ENCODE measurements at regions of chr13 and their contacts with region 1.

Region 1: GRCh38 chr13:60431108-60431700 is 34.2 kb downstream of the TDRD3 start:
- DNase-seq: peak; percentile 87
- H3K4me3 ChIP-seq: no peak overlapping the region
- H3K27ac ChIP-seq: peak overlapping the region; percentile 35
- H3K4me1 ChIP-seq: peaks cover 36% of the 10 kb centered on the region
- H3K27me3 ChIP-seq: no peaks in the 10 kb centered on the region
- CTCF ChIP-seq: peak; percentile 86

Region 2: GRCh38 chr13:59750860-59751259 is 680.3 kb before region 1 on chr13:
- CTCF ChIA-PET with region 1: no interaction called
- POLR2A ChIA-PET with region 1: no interaction called
- intact Hi-C with region 1: loop called (anchors 5 kb)
- DNase-seq: peak; percentile 93
- H3K4me3 ChIP-seq: peak overlapping the region; percentile 35
- H3K27ac ChIP-seq: peak overlapping the region; percentile 76
- H3K4me1 ChIP-seq: peaks cover 73% of the 10 kb centered on the region
- H3K27me3 ChIP-seq: no peaks in the 10 kb centered on the region
- CTCF ChIP-seq: peak; percentile 29; the same call in 1 of the 2 replicates

Region 3: GRCh38 chr13:59771272-59771671 is 659.9 kb before region 1 on chr13:
- CTCF ChIA-PET with region 1: no interaction called
- POLR2A ChIA-PET with region 1: no interaction called
- intact Hi-C with region 1: loop called (anchors 5 kb)
- DNase-seq: peak; percentile 73
- H3K4me3 ChIP-seq: no peak overlapping the region
- H3K27ac ChIP-seq: peak overlapping the region; percentile 70
- H3K4me1 ChIP-seq: peaks cover 83% of the 10 kb centered on the region
- H3K27me3 ChIP-seq: no peaks in the 10 kb centered on the region
- CTCF ChIP-seq: peak; percentile 80

Region 4: DNA sequence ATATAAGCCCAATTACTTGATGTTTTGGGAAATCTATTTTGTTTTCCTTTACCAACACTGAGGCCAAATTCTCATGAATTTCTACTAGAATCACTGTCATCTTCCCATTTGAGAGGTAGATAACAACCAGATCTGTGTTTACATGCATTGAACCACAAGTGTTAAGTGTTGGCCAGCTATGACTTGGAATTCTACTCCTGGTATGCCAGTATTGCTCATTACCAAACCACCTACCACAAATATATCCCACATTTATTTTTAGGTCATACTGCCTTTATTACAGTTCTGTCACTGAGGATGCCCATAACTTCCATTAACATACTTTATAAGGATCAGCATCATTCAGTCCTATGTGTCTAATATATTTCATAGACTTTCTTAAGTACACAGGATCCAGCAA is 596.4 kb before region 1 on chr13:
- CTCF ChIA-PET with region 1: no interaction called
- POLR2A ChIA-PET with region 1: no interaction called
- intact Hi-C with region 1: loop called (anchors 10 kb)
- DNase-seq: no peak
- H3K4me3 ChIP-seq: no peak overlapping the region
- H3K27ac ChIP-seq: peak overlapping the region; percentile 77
- H3K4me1 ChIP-seq: peaks cover 54% of the 10 kb centered on the region
- H3K27me3 ChIP-seq: no peaks in the 10 kb centered on the region
- CTCF ChIP-seq: no peak

Region 5: DNA sequence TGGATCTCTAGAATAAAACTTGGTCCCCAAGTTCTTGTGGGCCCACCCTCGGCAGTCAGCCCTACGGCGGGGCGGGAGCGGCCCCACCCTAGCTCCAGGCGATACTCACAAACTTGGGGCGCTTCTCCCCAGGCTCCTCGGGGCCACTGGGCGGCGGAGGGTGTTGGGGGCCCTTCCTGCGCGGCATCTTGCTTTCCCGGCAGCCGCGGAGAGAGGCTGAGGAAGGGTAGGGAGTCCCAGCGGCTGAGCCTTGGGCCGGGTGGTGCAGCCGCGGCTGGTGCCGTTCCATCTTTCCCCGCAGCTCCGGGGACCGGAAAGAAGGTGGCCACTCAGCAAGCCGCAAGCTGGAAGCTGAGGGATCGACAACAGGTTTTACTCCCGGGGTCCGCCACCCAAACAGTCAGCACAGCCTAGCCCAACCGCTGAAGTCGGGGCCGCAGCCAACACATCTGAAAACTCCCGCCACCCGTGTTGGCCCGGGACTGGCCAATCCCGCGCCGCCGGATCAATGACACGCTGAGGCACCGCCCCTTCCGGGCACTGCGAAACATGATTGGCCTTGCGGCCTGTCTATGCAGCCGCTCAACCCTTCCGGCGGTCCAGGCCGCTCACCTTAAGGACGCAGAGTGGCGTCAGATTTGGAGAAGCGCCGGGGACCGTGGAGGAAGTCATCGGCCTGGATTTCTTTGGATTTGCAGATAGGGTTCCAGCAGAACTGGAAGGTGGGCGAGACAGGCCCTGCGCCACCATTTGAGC is 267.5 kb before region 1 on chr13 and contains the start of gene DIAPH3:
- CTCF ChIA-PET with region 1: no interaction called
- POLR2A ChIA-PET with region 1: no interaction called
- intact Hi-C with region 1: loop called (anchors 5 kb)
- DNase-seq: peak; percentile 97
- H3K4me3 ChIP-seq: peak within 1 kb of the TSS; percentile 79
- H3K27ac ChIP-seq: peak within 1 kb of the TSS; percentile 84
- H3K4me1 ChIP-seq: peaks cover 17% of the 10 kb centered on the region
- H3K27me3 ChIP-seq: no peaks in the 10 kb centered on the region
- CTCF ChIP-seq: no peak
- total RNA-seq, gene DIAPH3: 62.3 and 65.7 TPM in 2 replicates

Region 6: GRCh38 chr13:60335531-60335930 is 95.7 kb before region 1 on chr13:
- CTCF ChIA-PET with region 1: interaction called, 3 read pairs
- POLR2A ChIA-PET with region 1: no interaction called
- intact Hi-C with region 1: loop called (anchors 2 kb)
- DNase-seq: peak; percentile 64
- H3K4me3 ChIP-seq: no peak overlapping the region
- H3K27ac ChIP-seq: peak overlapping the region; percentile 88
- H3K4me1 ChIP-seq: peaks cover 53% of the 10 kb centered on the region
- H3K27me3 ChIP-seq: no peaks in the 10 kb centered on the region
- CTCF ChIP-seq: peak; percentile 82

Region 7: DNA sequence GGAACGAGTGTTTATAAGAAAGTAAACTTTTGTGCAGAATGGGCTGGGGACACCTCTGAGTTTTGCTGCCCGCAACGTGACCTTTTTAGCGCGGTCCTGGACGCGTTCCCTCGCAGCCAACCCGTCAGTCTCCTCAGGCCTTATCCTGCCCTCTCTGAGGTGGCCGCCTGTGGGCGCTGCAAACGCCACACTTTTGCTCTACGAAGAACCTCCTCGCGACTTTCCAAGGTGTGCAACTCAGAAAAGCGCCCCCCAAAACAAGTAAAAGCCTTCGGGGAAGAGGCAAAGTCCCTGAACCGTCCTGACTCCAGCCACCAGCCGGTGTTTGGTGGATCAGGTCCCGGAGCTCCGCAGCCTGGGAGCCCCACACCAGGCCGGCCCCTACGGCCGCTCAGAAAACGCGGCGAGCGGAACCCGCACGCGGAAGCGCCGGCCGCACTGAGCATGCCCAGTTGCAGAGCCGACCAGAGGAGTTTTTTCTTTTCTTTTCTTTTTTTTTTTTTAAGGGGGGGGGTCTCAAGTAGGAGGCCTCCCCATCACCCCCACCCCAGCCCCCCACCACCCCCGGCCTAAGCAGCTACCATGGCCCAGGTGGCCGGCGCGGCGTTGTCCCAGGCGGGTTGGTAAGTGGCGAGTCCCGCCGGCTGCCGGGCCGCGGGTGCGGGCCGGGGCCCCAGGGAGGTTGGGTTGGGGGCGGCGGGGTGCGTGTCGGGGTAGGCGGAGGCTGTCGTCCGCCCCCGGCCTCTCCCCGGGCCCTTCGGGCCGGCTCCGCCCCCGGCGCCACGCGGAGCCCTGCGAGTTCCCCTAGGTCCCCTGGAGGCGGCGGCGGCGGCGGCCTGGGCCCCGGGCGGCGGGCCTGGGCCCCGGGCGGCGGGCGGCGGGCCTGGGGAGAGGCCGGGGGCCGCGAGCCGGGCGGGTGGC is 34.2 kb before region 1 on chr13 and contains the start of gene TDRD3:
- CTCF ChIA-PET with region 1: no interaction called
- POLR2A ChIA-PET with region 1: no interaction called
- intact Hi-C with region 1: loop called (anchors 2 kb)
- DNase-seq: peak; percentile 91
- H3K4me3 ChIP-seq: peak within 1 kb of the TSS; percentile 62
- H3K27ac ChIP-seq: peak within 1 kb of the TSS; percentile 93
- H3K4me1 ChIP-seq: peaks cover 27% of the 10 kb centered on the region
- H3K27me3 ChIP-seq: no peaks in the 10 kb centered on the region
- CTCF ChIP-seq: peak; percentile 84
- total RNA-seq, gene TDRD3: 30.7 and 34.1 TPM in 2 replicates

Region 8: DNA sequence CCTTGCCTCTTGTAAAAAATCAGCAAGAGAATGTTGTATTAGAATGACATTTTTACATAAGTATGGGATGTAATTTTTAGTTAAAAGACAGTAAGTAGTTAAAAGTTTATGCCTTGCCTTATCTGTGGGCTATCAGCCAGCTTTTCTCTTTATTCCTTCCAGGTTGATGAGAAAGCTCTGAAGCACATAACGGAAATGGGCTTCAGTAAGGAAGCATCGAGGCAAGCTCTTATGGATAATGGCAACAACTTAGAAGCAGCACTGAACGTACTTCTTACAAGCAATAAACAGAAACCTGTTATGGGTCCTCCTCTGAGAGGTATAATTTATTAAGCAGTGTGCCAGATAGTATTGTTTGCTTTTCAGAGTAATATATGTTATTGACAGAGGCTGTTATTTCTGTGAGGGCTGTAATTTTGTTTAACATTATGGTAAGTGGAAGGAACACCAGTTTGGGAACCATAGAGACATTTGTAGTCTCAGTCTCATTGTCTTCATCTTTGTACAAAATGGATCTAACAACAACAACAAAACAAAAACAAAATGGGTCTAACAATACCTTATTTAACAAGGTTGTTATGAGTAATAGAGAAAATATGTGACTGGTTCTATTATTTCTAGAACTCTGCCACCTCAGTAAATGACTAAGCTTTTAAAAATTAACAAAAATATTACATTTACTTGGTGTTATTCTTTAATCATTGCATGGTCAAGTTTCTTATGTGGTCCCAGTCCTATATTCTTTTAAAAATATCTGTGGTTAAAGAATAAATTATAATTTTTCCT is 78.6 kb after region 1 on chr13:
- CTCF ChIA-PET with region 1: no interaction called
- POLR2A ChIA-PET with region 1: no interaction called
- intact Hi-C with region 1: no loop called
- DNase-seq: no peak
- H3K4me3 ChIP-seq: no peak overlapping the region
- H3K27ac ChIP-seq: no peak overlapping the region
- H3K4me1 ChIP-seq: no peaks in the 10 kb centered on the region
- H3K27me3 ChIP-seq: no peaks in the 10 kb centered on the region
- CTCF ChIP-seq: no peak